IMR-90 (cell line): ENCODE measurements at regions of chr9 and their contacts with region 1.

Region 1: GRCh38 chr9:94563548-94563947 is 8.7 kb downstream of the PCAT7 start:
- DNase-seq: no peak
- ATAC-seq: no peak
- H3K4me3 ChIP-seq: no peak overlapping the region
- H3K27ac ChIP-seq: no peak overlapping the region
- H3K4me1 ChIP-seq: no peaks in the 10 kb centered on the region
- H3K27me3 ChIP-seq: peaks cover 2% of the 10 kb centered on the region
- CTCF ChIP-seq: no peak
- POLR2A ChIP-seq: no peak
- RAD21 ChIP-seq: no peak

Region 2: GRCh38 chr9:93786204-93786603 is 777.3 kb before region 1 on chr9:
- CTCF ChIA-PET with region 1: no interaction called
- POLR2A ChIA-PET with region 1: no interaction called
- dilution Hi-C with region 1: no loop called
- in situ Hi-C with region 1: no loop called
- intact Hi-C with region 1: no loop called
- DNase-seq: no peak
- ATAC-seq: no peak
- H3K4me3 ChIP-seq: no peak overlapping the region
- H3K27ac ChIP-seq: no peak overlapping the region
- H3K4me1 ChIP-seq: no peaks in the 10 kb centered on the region
- H3K27me3 ChIP-seq: no peaks in the 10 kb centered on the region
- CTCF ChIP-seq: no peak
- POLR2A ChIP-seq: no peak
- RAD21 ChIP-seq: no peak

Region 3: GRCh38 chr9:94507531-94508258 is 55.9 kb before region 1 on chr9:
- CTCF ChIA-PET with region 1: no interaction called
- POLR2A ChIA-PET with region 1: no interaction called
- dilution Hi-C with region 1: no loop called
- in situ Hi-C with region 1: no loop called
- intact Hi-C with region 1: loop called (anchors 10 kb)
- DNase-seq: no peak
- ATAC-seq: no peak
- H3K4me3 ChIP-seq: no peak overlapping the region
- H3K27ac ChIP-seq: no peak overlapping the region
- H3K4me1 ChIP-seq: no peaks in the 10 kb centered on the region
- H3K27me3 ChIP-seq: 0 out of 2 replicates have a peak, but pooled peaks cover 2% of the 10 kb centered on the region
- CTCF ChIP-seq: no peak
- POLR2A ChIP-seq: no peak
- RAD21 ChIP-seq: no peak

Region 4: GRCh38 chr9:94703488-94704140 is 140.1 kb after region 1 on chr9:
- CTCF ChIA-PET with region 1: no interaction called
- POLR2A ChIA-PET with region 1: no interaction called
- dilution Hi-C with region 1: no loop called
- in situ Hi-C with region 1: no loop called
- intact Hi-C with region 1: no loop called
- DNase-seq: no peak
- ATAC-seq: no peak
- H3K4me3 ChIP-seq: no peak overlapping the region
- H3K27ac ChIP-seq: no peak overlapping the region
- H3K4me1 ChIP-seq: no peaks in the 10 kb centered on the region
- H3K27me3 ChIP-seq: peaks cover 14% of the 10 kb centered on the region
- CTCF ChIP-seq: no peak
- POLR2A ChIP-seq: no peak
- RAD21 ChIP-seq: no peak